Transverse colon (tissue), 4 donors: ENCODE measurements at regions of chr15 and their contacts with region 1.

Region 1: GRCh38 chr15:67167091-67167490 is 87.4 kb downstream of the AAGAB start:
- DNase-seq: no peak
- H3K4me3 ChIP-seq: no peak overlapping the region
- H3K27ac ChIP-seq: peak overlapping the region in 2 of 4 donors; percentile 41 to 63
- H3K4me1 ChIP-seq: peaks cover 0 to 20% (median 5%) of the 10 kb centered on the region in 4 donors
- H3K27me3 ChIP-seq: no peaks in the 10 kb centered on the region
- CTCF ChIP-seq: no peak
- EP300 ChIP-seq: no peak
- POLR2A ChIP-seq: no peak

Region 2: DNA sequence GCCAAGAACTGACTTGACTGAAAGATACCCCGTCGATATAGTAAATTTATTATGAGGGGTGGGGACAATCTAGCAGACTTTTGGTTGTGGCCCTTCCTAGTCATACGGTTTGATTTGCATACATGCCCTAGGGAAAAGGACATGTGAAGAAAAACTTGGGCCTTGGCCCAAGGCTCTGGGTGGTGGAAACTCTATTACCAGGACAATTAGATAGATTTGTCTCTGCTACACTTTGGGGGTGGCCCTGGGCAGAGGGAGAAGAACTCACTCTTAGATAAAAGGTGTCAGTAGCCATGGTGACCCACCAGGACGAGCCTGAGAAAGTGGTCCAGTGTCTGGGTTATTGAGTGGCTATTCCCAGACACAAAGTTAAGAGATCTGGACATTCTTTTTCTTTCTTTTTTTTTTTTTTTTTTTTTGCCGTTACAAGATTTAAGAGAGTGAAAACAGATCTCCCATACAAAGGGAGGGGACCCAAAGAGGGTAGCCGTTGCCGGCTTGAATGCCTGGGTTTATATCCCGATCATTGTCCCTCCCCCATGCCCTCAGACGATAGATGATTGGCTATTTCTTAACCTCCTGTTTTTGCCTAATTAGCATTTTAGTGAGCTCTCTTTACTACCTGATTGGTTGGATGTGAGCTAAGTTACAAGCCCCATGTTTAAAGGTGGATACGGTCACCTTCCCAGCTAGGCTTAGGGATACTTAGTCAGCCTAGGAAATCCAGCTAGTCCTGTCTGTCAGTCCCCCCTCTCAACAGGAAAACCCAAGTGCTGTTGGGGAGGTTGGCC is 198.1 kb before region 1 on chr15:
- in situ Hi-C with region 1: no loop called
- intact Hi-C with region 1: no loop called
- DNase-seq: no peak
- H3K4me3 ChIP-seq: no peak overlapping the region
- H3K27ac ChIP-seq: no peak overlapping the region
- H3K4me1 ChIP-seq: no peaks in the 10 kb centered on the region
- H3K27me3 ChIP-seq: no peaks in the 10 kb centered on the region
- CTCF ChIP-seq: no peak
- EP300 ChIP-seq: no peak
- POLR2A ChIP-seq: no peak

Region 3: GRCh38 chr15:67177752-67178151 is 10.7 kb after region 1 on chr15:
- in situ Hi-C with region 1: no loop called
- intact Hi-C with region 1: loop called (anchors 1 kb)
- DNase-seq: no peak
- H3K4me3 ChIP-seq: no peak overlapping the region
- H3K27ac ChIP-seq: peak overlapping the region; percentile 36 to 66 (median 54)
- H3K4me1 ChIP-seq: peaks cover 0 to 36% (median 21%) of the 10 kb centered on the region in 4 donors
- H3K27me3 ChIP-seq: no peaks in the 10 kb centered on the region
- CTCF ChIP-seq: no peak
- EP300 ChIP-seq: no peak
- POLR2A ChIP-seq: no peak